GM12878 (cell line): ENCODE measurements at regions of chr16 and their contacts with region 1.

Region 1: GRCh38 chr16:2874912-2875362 is 8.1 kb upstream of the FLYWCH2 start:
- DNase-seq: peak; percentile 3
- ATAC-seq: peak; percentile 100
- H3K4me3 ChIP-seq: no peak overlapping the region
- H3K27ac ChIP-seq: no peak overlapping the region
- H3K4me1 ChIP-seq: no peaks in the 10 kb centered on the region
- H3K27me3 ChIP-seq: no peaks in the 10 kb centered on the region; a peak in 1 of 4 replicates
- CTCF ChIP-seq: peak; percentile 95 to 98 (median 97)
- EP300 ChIP-seq: no peak
- POLR2A ChIP-seq: no peak
- RAD21 ChIP-seq: peak; percentile 52

Region 2: DNA sequence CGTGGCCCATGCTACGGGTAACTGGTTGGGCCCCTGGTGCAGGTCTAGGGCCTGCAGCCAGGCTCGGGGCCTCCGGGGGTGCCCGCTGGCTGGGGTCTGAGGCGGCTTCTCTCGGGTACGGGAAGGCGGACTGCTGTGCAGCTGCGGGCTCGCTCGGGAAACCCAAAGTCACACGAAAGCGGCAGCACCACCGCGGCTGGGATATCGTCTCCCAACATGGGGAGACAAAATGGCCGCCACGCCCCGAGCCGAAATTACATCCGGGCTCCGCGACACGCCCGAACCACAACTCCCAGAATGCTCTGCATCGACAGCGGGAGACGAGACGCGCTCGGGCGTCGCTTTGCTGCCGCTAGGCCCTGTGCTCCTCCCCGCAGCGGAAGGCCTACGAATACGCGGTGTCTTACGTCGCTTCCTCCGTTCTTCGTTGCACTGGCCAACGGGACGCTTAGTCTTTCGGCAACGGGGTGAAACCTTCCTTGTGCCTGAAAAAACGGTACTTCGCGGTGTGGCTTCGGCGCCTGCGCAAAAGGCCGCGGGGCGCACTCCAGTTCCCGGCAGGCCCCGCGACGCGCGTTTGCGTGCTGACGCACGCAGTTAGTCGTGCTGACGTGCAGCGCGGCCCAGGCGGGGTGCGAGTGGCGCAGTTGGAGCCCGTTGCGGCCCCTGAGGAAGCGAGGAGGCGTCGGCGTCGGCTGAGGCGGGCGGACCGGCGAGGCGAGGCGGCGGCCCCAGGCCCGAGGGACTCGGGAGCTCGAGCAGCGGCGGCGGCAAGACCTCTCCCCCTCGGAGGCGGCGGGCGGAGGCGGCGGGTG is 122.7 kb before region 1 on chr16 and contains the start of gene SRRM2:
- CTCF ChIA-PET with region 1: no interaction called
- POLR2A ChIA-PET with region 1: interaction called, 10 read pairs
- RAD21 ChIA-PET with region 1: no interaction called
- SMC1A ChIA-PET with region 1: no interaction called
- in situ Hi-C with region 1: no loop called
- intact Hi-C with region 1: no loop called
- DNase-seq: peak; percentile 95
- ATAC-seq: peak; percentile 90
- H3K4me3 ChIP-seq: peak within 1 kb of the TSS; percentile 98
- H3K27ac ChIP-seq: peak within 1 kb of the TSS; percentile 99
- H3K4me1 ChIP-seq: peaks cover 17% of the 10 kb centered on the region; the same call in 1 of the 2 replicates
- H3K27me3 ChIP-seq: no peaks in the 10 kb centered on the region
- CTCF ChIP-seq: no peak
- EP300 ChIP-seq: no peak
- POLR2A ChIP-seq: peak; percentile 84
- RAD21 ChIP-seq: no peak
- polyA plus RNA-seq, gene SRRM2: 30.1 to 73.0 TPM

Region 3: GRCh38 chr16:2911580-2912329 is 36.8 kb after region 1 on chr16 and contains the start of gene FLYWCH1:
- CTCF ChIA-PET with region 1: interaction called, 80 read pairs
- POLR2A ChIA-PET with region 1: interaction called, 5 read pairs
- RAD21 ChIA-PET with region 1: interaction called, 6 read pairs
- SMC1A ChIA-PET with region 1: interaction called, 11 read pairs
- in situ Hi-C with region 1: loop called (anchors 5 kb)
- intact Hi-C with region 1: loop called (anchors 2 kb)
- DNase-seq: peak; percentile 88
- ATAC-seq: peak; percentile 98
- H3K4me3 ChIP-seq: peak within 1 kb of the TSS; percentile 97
- H3K27ac ChIP-seq: peak within 1 kb of the TSS; percentile 54
- H3K4me1 ChIP-seq: peaks cover 3% of the 10 kb centered on the region; the same call in 1 of the 2 replicates
- H3K27me3 ChIP-seq: no peaks in the 10 kb centered on the region
- CTCF ChIP-seq: no peak
- EP300 ChIP-seq: no peak
- POLR2A ChIP-seq: peak; percentile 86
- RAD21 ChIP-seq: no peak
- polyA plus RNA-seq, gene FLYWCH1: 0.47 to 0.60 TPM

Region 4: GRCh38 chr16:2919511-2920255 is 44.7 kb after region 1 on chr16:
- CTCF ChIA-PET with region 1: interaction called, 80 read pairs
- POLR2A ChIA-PET with region 1: interaction called, 3 read pairs
- RAD21 ChIA-PET with region 1: interaction called, 4 read pairs
- SMC1A ChIA-PET with region 1: interaction called, 6 read pairs
- in situ Hi-C with region 1: loop called (anchors 5 kb)
- intact Hi-C with region 1: loop called (anchors 1 kb)
- DNase-seq: no peak
- ATAC-seq: peak; percentile 70
- H3K4me3 ChIP-seq: no peak overlapping the region
- H3K27ac ChIP-seq: no peak overlapping the region
- H3K4me1 ChIP-seq: no peaks in the 10 kb centered on the region
- H3K27me3 ChIP-seq: no peaks in the 10 kb centered on the region
- CTCF ChIP-seq: peak; percentile 75 to 93 (median 91)
- EP300 ChIP-seq: no peak
- POLR2A ChIP-seq: no peak
- RAD21 ChIP-seq: peak; percentile 78